ENCODE measurements at regions of chr17 and their contacts with region 1.

Region 1: GRCh38 chr17:39153599-39154051 is 2.2 kb upstream of the PLXDC1 start:
- DNase-seq: peak; percentile 96
- H3K4me3 Mint-ChIP-seq: peak overlapping the region; percentile 94
- H3K27ac Mint-ChIP-seq: peak overlapping the region; percentile 95
- H3K4me1 Mint-ChIP-seq: peaks cover 27% of the 10 kb centered on the region
- H3K27me3 Mint-ChIP-seq: peaks cover 4% of the 10 kb centered on the region

Region 2: DNA sequence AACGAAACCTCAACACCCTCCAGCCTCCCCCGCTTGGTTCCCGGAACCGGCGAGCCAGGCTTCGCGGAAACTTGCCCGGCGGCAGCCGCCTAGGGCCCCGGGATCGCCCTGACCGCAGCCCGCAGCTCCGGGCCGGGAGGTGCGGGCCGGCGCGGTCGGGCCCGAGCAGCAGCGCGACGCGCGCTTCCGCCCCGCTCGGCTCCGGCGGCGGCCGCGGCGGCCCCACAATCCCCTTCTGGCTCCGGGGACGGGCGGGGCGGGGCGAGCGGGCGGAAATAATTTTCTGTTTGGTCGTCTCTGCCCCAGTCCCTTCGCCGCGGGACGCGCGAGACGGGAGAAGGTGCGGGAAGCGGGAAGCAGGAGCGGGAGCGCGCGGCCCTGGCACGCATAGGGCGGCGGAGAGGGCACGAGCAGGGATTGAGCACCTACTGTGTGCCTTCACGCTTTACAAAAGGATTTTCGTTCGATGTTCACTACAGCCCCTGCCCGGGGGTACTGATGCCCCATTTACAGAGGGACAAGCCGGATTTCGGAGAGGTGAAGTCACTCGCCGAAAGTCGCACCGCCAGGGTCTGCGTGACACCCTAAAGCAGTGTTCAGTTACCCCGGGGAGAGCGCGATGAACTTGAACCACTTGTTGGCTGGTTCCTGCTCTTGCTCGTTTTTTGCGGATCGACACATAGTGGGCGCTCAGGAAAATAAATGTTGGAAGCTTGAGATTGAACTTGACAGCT is 451.3 kb before region 1 on chr17:
- CTCF ChIA-PET with region 1: no interaction called
- intact Hi-C with region 1: loop called (anchors 2 kb)
- DNase-seq: peak; percentile 92
- H3K4me3 Mint-ChIP-seq: peak overlapping the region; percentile 100
- H3K27ac Mint-ChIP-seq: peak overlapping the region; percentile 100
- H3K4me1 Mint-ChIP-seq: peaks cover 45% of the 10 kb centered on the region
- H3K27me3 Mint-ChIP-seq: no peaks in the 10 kb centered on the region

Region 3: DNA sequence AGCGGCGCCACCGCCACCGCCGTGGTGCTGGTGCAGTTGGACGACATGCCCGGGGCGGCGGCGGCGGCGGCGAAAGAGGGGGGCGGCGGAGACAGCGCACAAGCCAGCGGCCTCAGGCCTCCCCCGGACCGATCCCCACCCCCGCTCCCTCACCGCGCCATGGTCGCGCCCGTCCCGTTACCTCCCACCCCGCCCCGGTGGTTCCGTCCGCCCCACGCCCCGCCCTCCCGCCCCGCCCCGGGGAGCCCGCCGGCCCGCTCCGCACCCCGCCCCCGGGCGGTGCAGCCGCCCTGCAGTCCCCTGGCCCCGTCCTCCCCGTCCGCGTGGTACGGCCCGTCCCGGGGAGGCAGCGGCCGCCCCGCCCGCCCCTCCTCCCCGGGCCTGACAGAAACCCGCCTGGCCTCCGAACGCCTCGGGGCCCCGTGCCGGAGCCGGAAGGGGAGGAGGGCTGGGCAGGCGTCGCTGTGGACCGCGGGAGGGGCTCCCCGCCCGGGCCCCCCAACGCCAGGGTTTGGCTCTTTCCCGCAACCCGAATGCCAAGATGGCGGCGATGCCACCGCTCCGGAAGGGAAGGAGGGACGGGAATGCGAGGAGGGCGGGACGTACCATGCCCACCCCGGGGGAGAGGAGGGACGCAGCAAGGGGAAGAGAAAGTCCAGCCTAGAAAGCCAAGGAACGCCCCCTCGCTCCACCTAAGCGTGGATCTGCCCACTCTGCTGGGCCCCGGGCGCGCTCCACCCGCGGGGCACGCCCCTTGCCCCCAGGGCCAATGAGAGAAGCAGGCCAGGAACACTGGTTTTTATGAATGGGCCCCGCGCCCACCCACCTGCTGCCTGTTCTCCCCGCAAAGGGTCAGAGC is 354.0 kb before region 1 on chr17 and contains the start of gene PIP4K2B:
- CTCF ChIA-PET with region 1: no interaction called
- intact Hi-C with region 1: loop called (anchors 5 kb)
- DNase-seq: peak; percentile 91
- H3K4me3 Mint-ChIP-seq: peak within 1 kb of the TSS; percentile 95
- H3K27ac Mint-ChIP-seq: peak within 1 kb of the TSS; percentile 89
- H3K4me1 Mint-ChIP-seq: peaks cover 34% of the 10 kb centered on the region
- H3K27me3 Mint-ChIP-seq: no peaks in the 10 kb centered on the region
- total RNA-seq, gene PIP4K2B: 30.1 to 33.4 TPM

Region 4: GRCh38 chr17:39018267-39019134 is 135.1 kb before region 1 on chr17:
- CTCF ChIA-PET with region 1: interaction called, 11 read pairs
- intact Hi-C with region 1: no loop called
- DNase-seq: peak; percentile 74
- H3K4me3 Mint-ChIP-seq: no peak overlapping the region
- H3K27ac Mint-ChIP-seq: peak overlapping the region; percentile 72
- H3K4me1 Mint-ChIP-seq: peaks cover 28% of the 10 kb centered on the region
- H3K27me3 Mint-ChIP-seq: no peaks in the 10 kb centered on the region

Region 5: DNA sequence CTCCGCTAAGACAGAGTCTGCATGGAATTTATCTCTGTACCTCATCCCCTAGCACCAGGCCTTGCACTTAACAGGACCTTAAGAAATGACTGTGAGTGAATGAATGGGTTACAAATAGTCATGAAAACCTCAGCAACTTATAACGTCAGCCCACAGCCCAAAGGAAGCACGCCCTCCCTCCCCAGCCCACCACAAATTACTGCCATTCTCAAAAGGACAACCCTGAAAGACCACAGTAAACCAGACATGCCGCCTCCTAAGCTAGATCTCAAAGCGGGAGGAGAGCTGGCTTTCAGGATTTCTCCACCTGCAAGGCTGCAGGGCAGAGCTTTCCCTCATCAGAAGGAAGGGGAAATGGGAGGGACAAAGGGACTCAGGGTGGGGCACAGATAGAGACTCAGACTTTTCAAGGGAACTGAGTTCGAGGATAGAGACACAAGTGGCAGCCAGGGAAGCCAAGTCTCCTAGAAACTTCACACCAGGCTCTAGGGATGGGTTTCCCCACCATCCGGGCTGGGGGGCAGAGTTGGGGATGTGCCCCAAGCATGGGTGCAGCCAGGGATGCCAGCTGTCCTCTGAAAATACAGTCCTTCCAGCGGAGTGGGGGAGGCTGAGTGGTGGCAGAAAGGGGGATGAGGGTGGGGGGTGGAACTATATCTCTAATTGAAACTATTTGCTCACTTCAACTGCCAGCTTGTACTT is 58.9 kb before region 1 on chr17:
- CTCF ChIA-PET with region 1: interaction called, 5 read pairs
- intact Hi-C with region 1: loop called (anchors 1 kb)
- DNase-seq: no peak
- H3K4me3 Mint-ChIP-seq: no peak overlapping the region
- H3K27ac Mint-ChIP-seq: peak overlapping the region; percentile 47
- H3K4me1 Mint-ChIP-seq: peaks cover 74% of the 10 kb centered on the region
- H3K27me3 Mint-ChIP-seq: no peaks in the 10 kb centered on the region

Region 6: DNA sequence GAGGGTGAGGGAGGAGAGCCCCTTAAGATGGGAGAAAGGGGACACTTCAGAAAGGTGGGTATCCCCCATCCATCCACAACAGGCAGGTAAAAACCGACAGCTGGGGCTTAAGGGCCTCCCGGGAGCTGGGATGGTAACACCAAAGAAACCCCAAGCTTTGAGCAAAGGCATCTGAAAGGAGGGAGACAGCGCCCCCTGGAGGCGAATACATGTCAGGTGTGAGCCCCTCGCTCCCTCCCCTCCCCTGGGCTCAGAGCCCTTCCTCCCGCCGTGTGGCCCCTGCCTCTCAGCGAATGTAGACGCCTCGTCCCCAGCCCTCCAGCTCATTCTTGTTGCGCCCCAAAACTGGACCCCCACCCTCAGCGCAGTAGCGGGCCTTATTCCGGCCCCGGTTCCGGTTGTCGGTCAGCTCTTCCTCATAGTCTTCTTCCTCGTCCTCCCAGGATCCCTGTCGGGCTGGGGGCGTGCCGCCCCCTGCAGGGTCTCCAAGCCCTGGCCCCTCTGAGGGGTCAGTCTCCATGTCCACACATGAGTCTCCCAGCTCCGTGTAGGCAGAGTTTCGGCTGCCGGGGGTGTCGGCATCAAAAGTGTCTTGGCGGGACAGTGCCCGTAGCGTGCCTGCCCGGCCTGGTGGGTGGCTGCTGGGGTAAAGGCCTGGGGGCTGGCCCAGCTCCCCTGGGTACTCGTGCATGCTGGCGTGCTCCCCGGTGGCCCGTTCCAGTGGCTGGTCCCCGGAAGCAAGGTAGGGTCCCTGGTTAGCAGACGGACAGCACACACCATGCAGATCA is 21.5 kb after region 1 on chr17:
- CTCF ChIA-PET with region 1: interaction called, 16 read pairs
- intact Hi-C with region 1: no loop called
- DNase-seq: peak; percentile 85
- H3K4me3 Mint-ChIP-seq: no peak overlapping the region
- H3K27ac Mint-ChIP-seq: no peak overlapping the region
- H3K4me1 Mint-ChIP-seq: peaks cover 4% of the 10 kb centered on the region
- H3K27me3 Mint-ChIP-seq: no peaks in the 10 kb centered on the region

Measured in activated naive CD4-positive, alpha-beta T cell treated with anti-CD3 and anti-CD28 coated beads for 36 hours (primary cell).